Activated T-helper 1 cell treated with anti-CD3 and anti-CD28 coated beads, Interleukin-12 subunit alpha, Interleukin-12 subunit beta, Interleukin-2, Interleukin-4 antibody, amounts not matched to agents 30 ng/mL and 10 ng/mL and 1 ng/mL, durations not matched to agents 14 hours and 24 hours and 36 hours (primary cell): ENCODE measurements at regions of chr20 and their contacts with region 1.

Region 1: GRCh38 chr20:3767427-3768341 is at the start of gene ADISSP:
- DNase-seq: peak; percentile 98
- H3K4me3 Mint-ChIP-seq: peak within 1 kb of the TSS; percentile 87
- H3K27ac Mint-ChIP-seq: peak within 1 kb of the TSS; percentile 92
- H3K4me1 Mint-ChIP-seq: peaks cover 20% of the 10 kb centered on the region
- H3K27me3 Mint-ChIP-seq: peaks cover 9% of the 10 kb centered on the region
- total RNA-seq, gene ADISSP: 55.5 and 64.6 TPM in 2 replicates

Region 2: GRCh38 chr20:3470627-3471396 is 296.9 kb before region 1 on chr20 and contains the start of gene ATRN:
- intact Hi-C with region 1: loop called (anchors 5 kb)
- DNase-seq: peak; percentile 84
- H3K4me3 Mint-ChIP-seq: peak within 1 kb of the TSS; percentile 91
- H3K27ac Mint-ChIP-seq: peak within 1 kb of the TSS; percentile 55
- H3K4me1 Mint-ChIP-seq: peaks cover 28% of the 10 kb centered on the region
- H3K27me3 Mint-ChIP-seq: peaks cover 12% of the 10 kb centered on the region
- total RNA-seq, gene ATRN: 10.9 and 11.9 TPM in 2 replicates

Region 3: GRCh38 chr20:3658716-3659491 is 108.8 kb before region 1 on chr20:
- intact Hi-C with region 1: no loop called
- DNase-seq: no peak
- H3K4me3 Mint-ChIP-seq: peak overlapping the region; percentile 21
- H3K27ac Mint-ChIP-seq: no peak overlapping the region
- H3K4me1 Mint-ChIP-seq: peaks cover 13% of the 10 kb centered on the region
- H3K27me3 Mint-ChIP-seq: peaks cover 37% of the 10 kb centered on the region

Region 4: GRCh38 chr20:3696200-3696599 is 71.5 kb before region 1 on chr20:
- intact Hi-C with region 1: no loop called
- DNase-seq: no peak
- H3K4me3 Mint-ChIP-seq: no peak overlapping the region
- H3K27ac Mint-ChIP-seq: no peak overlapping the region
- H3K4me1 Mint-ChIP-seq: no peaks in the 10 kb centered on the region
- H3K27me3 Mint-ChIP-seq: no peaks in the 10 kb centered on the region

Region 5: GRCh38 chr20:3710703-3711483 is 56.8 kb before region 1 on chr20:
- intact Hi-C with region 1: no loop called
- DNase-seq: peak; percentile 50
- H3K4me3 Mint-ChIP-seq: no peak overlapping the region
- H3K27ac Mint-ChIP-seq: no peak overlapping the region
- H3K4me1 Mint-ChIP-seq: no peaks in the 10 kb centered on the region
- H3K27me3 Mint-ChIP-seq: peaks cover 10% of the 10 kb centered on the region

Region 6: DNA sequence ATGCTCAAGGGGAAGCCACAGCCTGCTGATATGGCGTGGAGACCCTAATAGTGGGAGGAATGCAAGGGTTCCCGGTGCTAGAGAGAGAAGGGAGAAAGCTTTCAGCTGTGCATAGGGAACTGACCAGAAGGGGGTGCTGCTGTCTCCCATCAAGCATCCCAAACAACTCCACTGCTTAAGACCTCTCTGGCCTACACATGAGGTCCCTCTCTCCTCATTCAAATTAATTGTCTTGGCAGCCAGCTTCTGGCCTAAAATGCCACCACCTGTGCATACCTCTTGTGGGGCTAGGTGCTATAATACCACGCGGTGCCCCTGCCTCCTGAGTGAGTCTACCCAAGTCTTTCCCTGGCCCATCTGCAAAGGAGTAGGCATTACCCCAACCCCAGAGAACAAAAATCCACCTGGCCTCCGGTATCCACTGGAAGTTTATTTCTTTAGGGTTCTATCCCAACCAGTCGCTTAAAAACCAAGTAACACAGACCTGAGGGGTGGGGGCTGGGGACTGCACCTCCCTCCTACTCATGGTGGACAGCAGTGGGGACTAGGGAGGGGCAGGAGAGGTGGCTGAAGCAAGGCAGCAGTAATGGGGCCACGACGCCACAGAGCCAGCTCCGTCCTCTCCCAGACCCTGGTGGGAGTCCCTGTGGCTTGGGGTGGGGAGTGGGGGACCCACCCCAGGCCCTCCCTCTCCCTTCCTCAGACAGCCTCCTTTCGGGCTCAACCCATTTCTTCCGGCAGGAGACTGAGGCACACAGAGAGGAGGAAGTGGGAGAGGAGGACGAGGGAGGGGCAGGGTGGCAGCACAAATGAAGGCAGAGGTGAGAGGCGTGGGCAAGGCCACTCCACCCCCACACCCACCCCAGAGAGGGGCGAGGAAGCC is 14.3 kb before region 1 on chr20:
- intact Hi-C with region 1: loop called (anchors 1 kb)
- DNase-seq: peak; percentile 51
- H3K4me3 Mint-ChIP-seq: no peak overlapping the region
- H3K27ac Mint-ChIP-seq: no peak overlapping the region
- H3K4me1 Mint-ChIP-seq: peaks cover 7% of the 10 kb centered on the region
- H3K27me3 Mint-ChIP-seq: no peaks in the 10 kb centered on the region

Region 7: DNA sequence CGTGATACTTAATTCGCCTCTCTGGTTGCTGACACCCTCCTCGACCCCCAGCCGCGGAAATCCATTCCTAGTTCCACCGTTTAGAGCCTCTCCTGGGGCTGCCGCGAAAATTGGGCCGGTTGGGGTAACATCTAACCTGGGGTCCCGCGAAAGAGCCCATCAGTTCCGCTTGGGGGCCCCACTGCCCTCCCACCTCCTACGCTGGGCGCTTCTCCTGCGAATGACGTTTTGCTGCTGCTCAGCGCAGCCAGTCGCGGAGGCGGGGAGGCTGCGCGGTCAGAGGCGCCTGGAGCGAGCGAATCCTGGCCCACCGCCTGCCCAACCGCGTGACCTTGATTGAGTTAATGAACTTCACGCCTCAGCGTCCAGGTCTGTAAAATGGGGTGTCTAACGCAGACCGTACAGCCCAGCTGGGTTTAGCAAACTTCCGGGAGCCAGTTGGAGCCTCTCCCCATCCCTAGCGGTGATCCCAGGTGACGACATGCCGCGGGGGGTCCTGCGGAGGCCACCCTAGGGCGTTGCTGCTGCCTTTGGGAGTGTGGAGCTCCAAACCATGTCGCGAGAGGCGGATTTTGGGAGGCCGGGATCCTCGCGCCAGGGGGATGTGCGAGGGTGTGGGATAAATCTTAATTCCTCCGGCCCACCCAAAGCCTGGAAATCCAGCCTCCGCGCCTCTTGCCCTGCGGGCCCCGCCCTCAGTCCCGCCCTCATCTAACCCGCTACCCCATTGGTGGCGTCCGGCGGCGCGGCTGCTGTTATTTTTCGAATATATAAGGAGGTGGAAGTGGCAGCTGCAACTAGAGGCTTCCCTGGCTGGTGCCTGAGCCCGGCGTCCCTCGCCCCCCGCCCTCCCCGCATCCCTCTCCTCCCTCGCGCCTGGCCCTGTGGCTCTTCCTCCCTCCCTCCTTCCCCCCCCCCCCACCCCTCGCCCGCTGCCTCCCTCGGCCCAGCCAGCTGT is 28.1 kb after region 1 on chr20 and contains the start of gene CDC25B:
- intact Hi-C with region 1: loop called (anchors 1 kb)
- DNase-seq: peak; percentile 81
- H3K4me3 Mint-ChIP-seq: peak within 1 kb of the TSS; percentile 93
- H3K27ac Mint-ChIP-seq: peak within 1 kb of the TSS; percentile 96
- H3K4me1 Mint-ChIP-seq: peaks cover 47% of the 10 kb centered on the region
- H3K27me3 Mint-ChIP-seq: no peaks in the 10 kb centered on the region
- total RNA-seq, gene CDC25B: 71.7 and 76.2 TPM in 2 replicates

Region 8: DNA sequence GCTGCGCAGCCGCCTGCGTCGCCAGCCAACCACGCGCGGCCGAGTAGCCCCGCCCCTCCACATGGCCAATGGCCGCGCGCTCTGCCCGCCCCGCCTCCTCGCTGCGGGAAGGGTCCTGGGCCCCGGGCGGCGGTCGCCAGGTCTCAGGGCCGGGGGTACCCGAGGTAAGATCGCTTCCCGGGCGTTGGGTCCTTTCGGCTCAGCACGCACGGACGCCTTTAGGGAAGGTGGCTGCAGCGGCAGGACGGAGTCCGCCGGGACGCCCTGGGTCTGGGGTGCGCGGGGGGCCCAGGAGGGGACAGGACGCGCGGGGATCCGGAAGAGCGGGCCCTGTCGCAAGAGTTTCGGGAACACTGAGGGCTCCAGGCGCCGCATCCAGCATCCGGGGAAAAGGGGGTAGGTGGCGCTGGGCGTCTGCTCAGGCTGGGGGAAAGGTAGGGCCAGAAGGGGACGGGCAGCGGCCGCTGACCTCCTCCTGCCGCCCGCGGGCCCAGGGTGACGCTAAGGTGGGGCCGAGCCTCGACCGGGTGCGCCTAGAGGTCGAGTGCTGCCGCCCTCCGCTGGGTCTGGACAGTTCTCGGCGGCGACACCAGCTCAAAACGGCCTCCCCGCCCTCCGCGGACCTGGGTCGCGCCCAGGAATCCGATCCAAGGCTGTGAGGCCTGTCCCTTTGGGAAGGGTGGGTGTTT is 79.2 kb after region 1 on chr20 and contains the start of gene MAVS:
- intact Hi-C with region 1: loop called (anchors 1 kb)
- DNase-seq: peak; percentile 87
- H3K4me3 Mint-ChIP-seq: peak within 1 kb of the TSS; percentile 90
- H3K27ac Mint-ChIP-seq: peak within 1 kb of the TSS; percentile 81
- H3K4me1 Mint-ChIP-seq: peaks cover 22% of the 10 kb centered on the region
- H3K27me3 Mint-ChIP-seq: no peaks in the 10 kb centered on the region
- total RNA-seq, gene MAVS: 40.8 TPM in 2 replicates

Region 9: DNA sequence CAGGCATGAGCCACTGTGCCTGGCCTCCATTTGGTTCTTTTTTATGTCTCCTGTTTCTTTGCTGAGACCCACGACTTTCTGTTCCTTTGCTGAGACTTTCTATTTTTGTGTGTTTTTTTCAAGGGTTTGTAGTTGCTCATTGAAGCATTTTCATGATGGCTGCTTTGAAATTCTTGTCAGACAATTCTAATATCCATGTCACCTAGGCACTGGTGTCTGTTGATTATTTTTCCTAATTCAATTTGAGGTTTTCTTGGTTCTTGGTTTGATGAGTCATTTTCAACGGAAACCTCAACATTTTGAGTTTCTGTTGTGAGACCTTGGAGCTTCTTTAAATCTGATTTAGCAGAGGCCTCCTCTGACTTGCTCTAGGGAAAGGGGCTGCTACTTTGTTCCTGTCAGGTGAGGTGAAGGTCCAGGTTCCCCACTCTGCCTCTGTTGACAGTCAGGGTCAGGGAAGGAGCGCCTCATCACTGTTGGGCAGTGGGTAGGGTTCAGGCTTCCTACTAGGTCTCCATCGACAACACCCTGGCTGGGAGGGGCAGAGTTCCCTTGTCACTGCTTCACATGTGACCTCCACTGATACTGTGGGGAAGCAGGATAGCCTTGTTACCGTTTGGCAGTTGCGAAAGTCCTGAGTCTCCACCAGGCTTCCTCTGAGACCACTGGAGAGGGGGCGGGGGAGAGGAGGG is 314.9 kb after region 1 on chr20:
- intact Hi-C with region 1: loop called (anchors 1 kb)
- DNase-seq: peak; percentile 50
- H3K4me3 Mint-ChIP-seq: peak overlapping the region; percentile 78
- H3K27ac Mint-ChIP-seq: peak overlapping the region; percentile 92
- H3K4me1 Mint-ChIP-seq: peaks cover 56% of the 10 kb centered on the region
- H3K27me3 Mint-ChIP-seq: peaks cover 2% of the 10 kb centered on the region